ENCODE measurements at regions of chr22 and their contacts with region 1.

Region 1: GRCh38 chr22:40463017-40463631 is 92.7 kb downstream of the SGSM3 start:
- DNase-seq: peak; percentile 74
- ATAC-seq: peak; percentile 84
- H3K4me3 Mint-ChIP-seq: peak overlapping the region; percentile 87
- H3K27ac Mint-ChIP-seq: peak overlapping the region; percentile 91
- H3K4me1 Mint-ChIP-seq: peaks cover 65% of the 10 kb centered on the region
- H3K27me3 Mint-ChIP-seq: no peaks in the 10 kb centered on the region

Region 2: GRCh38 chr22:40009292-40009769 is 453.8 kb before region 1 on chr22:
- CTCF ChIA-PET with region 1: no interaction called
- POLR2A ChIA-PET with region 1: no interaction called
- intact Hi-C with region 1: no loop called
- DNase-seq: no peak
- ATAC-seq: no peak
- H3K4me3 Mint-ChIP-seq: peak overlapping the region; percentile 63
- H3K27ac Mint-ChIP-seq: peak overlapping the region; percentile 66
- H3K4me1 Mint-ChIP-seq: peaks cover 19% of the 10 kb centered on the region
- H3K27me3 Mint-ChIP-seq: peaks cover 4% of the 10 kb centered on the region

Region 3: GRCh38 chr22:40449676-40450035 is 13.5 kb before region 1 on chr22:
- CTCF ChIA-PET with region 1: interaction called, 4 read pairs
- POLR2A ChIA-PET with region 1: no interaction called
- intact Hi-C with region 1: loop called in 1 of 2 experiments (anchors 1 kb)
- DNase-seq: no peak
- ATAC-seq: no peak
- H3K4me3 Mint-ChIP-seq: no peak overlapping the region
- H3K27ac Mint-ChIP-seq: no peak overlapping the region
- H3K4me1 Mint-ChIP-seq: peaks cover 67% of the 10 kb centered on the region
- H3K27me3 Mint-ChIP-seq: no peaks in the 10 kb centered on the region

Region 4: DNA sequence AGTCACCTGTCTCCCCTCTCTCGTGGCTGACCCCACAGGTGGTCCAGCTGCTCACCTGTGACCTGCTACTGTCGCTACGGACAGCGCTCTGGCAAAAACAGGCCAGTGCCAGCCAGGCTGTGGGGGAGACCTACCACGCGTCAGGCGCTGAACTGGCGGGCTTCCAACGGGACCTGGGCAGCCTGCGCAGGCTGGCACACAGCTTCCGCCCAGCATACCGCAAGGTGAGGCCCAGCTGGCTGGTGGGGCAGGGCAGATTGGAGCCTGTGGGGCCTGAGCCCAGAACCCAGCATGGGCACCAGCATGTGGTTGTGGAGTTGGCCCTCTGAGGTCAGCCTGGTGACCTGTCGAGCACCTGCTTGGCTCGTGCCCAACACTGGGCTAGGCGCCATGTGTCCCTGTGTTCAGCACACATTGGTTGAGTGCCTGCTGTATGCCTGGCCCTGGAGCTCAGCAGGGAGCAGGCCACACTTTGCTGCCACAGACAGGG is 1439.9 kb after region 1 on chr22:
- CTCF ChIA-PET with region 1: no interaction called
- POLR2A ChIA-PET with region 1: no interaction called
- intact Hi-C with region 1: no loop called
- DNase-seq: no peak
- ATAC-seq: no peak
- H3K4me3 Mint-ChIP-seq: no peak overlapping the region
- H3K27ac Mint-ChIP-seq: no peak overlapping the region
- H3K4me1 Mint-ChIP-seq: peaks cover 5% of the 10 kb centered on the region
- H3K27me3 Mint-ChIP-seq: no peaks in the 10 kb centered on the region

Measured in activated CD4-positive, alpha-beta T cell treated with anti-CD3 and anti-CD28 coated beads for 36 hours (primary cell).